CD8-positive, alpha-beta T cell (primary cell): ENCODE measurements at regions of chr1 and their contacts with region 1.

Region 1: DNA sequence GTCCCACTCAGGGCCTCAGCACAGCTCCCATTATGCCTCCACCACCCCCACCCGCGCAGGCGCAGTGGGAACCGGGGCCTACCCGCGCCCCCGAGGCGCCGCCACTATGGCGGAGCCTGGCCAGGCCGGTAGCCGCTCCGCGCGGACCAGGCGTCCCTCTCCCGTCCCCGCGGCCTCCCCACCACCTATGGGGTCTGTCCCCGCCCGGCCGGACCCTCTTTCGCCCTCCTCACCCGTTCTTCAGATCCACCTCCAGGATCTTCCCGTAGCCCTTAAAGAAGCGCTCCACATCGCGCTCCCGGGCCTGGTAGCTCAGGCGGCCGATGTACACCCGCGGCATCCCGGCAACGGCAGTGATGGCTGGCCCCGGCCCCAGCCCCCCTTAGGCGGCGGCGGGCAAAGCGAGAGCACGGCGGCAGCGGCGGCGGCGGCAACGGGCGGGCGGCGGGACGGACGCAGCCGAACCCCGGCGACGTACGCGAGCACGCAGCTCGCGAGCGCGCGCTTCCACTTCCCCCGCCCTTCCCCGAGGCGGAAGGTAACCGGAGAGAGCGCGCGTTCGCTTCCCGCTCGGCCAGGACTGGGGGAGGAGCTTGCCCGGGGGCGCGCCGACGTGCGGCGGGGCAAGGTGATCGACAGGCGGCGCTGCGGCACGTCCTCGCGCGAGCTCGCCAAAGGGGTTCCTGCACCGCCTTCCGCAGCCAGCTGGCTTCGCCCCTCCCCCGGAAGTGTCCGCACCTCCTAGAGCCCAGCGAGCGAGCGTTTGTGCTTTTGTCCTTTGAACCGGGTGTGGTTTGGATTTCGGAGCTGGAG is at the start of gene SRSF4:
- DNase-seq: peak; percentile 98 to 99 (median 99)
- ATAC-seq: peak; percentile 92
- H3K4me3 ChIP-seq: peak within 1 kb of the TSS; percentile 89 to 98
- H3K4me3 Mint-ChIP-seq: peak within 1 kb of the TSS; percentile 94
- H3K27ac ChIP-seq: peak within 1 kb of the TSS; percentile 94 to 100
- H3K27ac Mint-ChIP-seq: peak within 1 kb of the TSS; percentile 94
- H3K4me1 ChIP-seq: peaks cover 37% of the 10 kb centered on the region
- H3K4me1 Mint-ChIP-seq: peaks cover 48% of the 10 kb centered on the region
- H3K27me3 ChIP-seq: no peaks in the 10 kb centered on the region
- H3K27me3 Mint-ChIP-seq: no peaks in the 10 kb centered on the region
- CTCF ChIP-seq: peak; percentile 68
- total RNA-seq, gene SRSF4: 83.6 to 92.2 TPM

Region 2: DNA sequence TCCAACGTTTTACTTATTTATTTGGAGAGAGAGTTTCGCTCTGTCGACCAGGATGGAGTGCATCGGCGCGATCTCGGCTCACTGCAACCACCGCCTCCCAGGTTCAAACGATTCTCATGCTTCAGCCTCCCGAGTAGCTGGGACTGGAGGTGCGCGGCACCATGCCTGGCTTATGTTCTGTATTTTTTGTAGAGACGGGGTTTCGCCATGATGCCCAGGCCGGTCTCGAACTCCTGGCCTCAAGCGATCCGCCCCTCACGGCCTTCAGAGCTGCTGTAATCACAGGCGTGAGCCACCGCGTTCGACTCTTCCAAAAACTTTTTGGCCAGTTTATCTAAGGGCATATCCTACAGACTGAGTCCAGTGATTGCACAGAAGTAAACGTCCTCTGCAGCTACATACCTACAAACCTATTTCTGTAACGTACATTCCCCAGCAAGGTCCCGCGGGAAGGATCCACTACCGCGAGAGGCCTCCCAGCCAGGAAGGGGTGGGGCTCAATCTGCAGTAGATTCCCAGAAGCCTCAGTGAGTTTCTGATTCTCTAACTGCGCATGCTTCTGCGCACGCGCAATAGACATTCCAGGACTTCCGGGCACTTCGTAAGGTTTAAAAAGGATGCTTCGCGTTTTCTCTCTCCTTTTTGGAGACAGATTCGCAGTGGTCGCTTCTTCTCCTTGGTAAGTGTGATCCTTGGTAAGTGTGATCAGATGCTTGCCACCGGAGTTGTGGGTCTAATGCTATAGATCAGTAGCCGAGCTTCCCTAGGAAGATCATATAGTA is 676.0 kb before region 1 on chr1 and contains the start of gene RCC1:
- CTCF ChIA-PET with region 1: no interaction called
- POLR2A ChIA-PET with region 1: interaction called, 3 read pairs
- intact Hi-C with region 1: loop called (anchors 5 kb)
- DNase-seq: peak; percentile 89 to 99 (median 94)
- ATAC-seq: peak; percentile 91
- H3K4me3 ChIP-seq: peak within 1 kb of the TSS; percentile 82 to 88
- H3K4me3 Mint-ChIP-seq: peak within 1 kb of the TSS; percentile 95
- H3K27ac ChIP-seq: peak within 1 kb of the TSS; percentile 77 to 85
- H3K27ac Mint-ChIP-seq: peak within 1 kb of the TSS; percentile 94
- H3K4me1 ChIP-seq: peaks cover 31% of the 10 kb centered on the region
- H3K4me1 Mint-ChIP-seq: peaks cover 45% of the 10 kb centered on the region
- H3K27me3 ChIP-seq: no peaks in the 10 kb centered on the region
- H3K27me3 Mint-ChIP-seq: no peaks in the 10 kb centered on the region
- CTCF ChIP-seq: no peak
- total RNA-seq, gene RCC1: 12.5 to 14.4 TPM

Region 3: DNA sequence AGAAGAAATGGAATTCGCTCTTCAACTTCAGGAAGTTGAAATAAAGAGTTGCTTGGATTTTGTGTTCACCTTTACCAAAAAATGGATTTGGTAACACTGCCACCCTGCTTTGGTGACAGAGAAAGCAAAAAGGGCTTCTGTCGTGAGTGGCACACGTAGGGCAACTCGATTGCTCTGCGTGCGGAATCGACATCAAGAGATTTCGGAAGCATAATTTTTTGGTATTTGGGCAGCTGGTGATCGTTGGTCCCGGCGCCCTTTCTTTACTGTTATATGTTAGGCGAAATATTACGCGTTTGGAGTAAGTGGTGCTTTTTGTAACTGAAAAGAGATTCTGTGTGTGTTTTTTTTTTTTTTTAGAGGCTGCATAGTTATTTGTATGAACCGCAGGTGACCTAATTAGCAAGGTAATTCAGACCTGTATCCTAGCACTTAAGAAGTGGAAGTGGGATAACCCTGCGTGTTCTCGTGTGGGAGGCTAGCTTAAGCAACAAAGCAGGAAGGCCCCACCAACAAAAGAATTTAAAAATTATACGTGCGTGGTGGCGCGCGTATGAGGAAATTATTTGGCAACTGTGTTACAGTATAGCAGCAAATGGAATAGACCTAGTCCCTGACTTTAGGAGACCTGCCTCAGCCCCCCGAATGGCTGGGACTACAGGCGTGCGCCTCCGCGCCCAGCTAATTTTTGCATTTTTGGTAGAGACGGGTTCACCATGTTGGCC is 533.0 kb before region 1 on chr1 and contains the start of gene RNU11:
- CTCF ChIA-PET with region 1: no interaction called
- POLR2A ChIA-PET with region 1: interaction called, 13 read pairs
- intact Hi-C with region 1: loop called (anchors 1 to 2 kb)
- DNase-seq: peak; percentile 76 to 97 (median 87)
- ATAC-seq: peak; percentile 65
- H3K4me3 ChIP-seq: peak within 1 kb of the TSS; percentile 41 to 65
- H3K4me3 Mint-ChIP-seq: peak within 1 kb of the TSS; percentile 80
- H3K27ac ChIP-seq: peak within 1 kb of the TSS; percentile 96 to 98
- H3K27ac Mint-ChIP-seq: peak within 1 kb of the TSS; percentile 99
- H3K4me1 ChIP-seq: peaks cover 30% of the 10 kb centered on the region
- H3K4me1 Mint-ChIP-seq: peaks cover 32% of the 10 kb centered on the region
- H3K27me3 ChIP-seq: no peaks in the 10 kb centered on the region
- H3K27me3 Mint-ChIP-seq: no peaks in the 10 kb centered on the region
- CTCF ChIP-seq: no peak
- total RNA-seq, gene RNU11: not detected

Region 4: DNA sequence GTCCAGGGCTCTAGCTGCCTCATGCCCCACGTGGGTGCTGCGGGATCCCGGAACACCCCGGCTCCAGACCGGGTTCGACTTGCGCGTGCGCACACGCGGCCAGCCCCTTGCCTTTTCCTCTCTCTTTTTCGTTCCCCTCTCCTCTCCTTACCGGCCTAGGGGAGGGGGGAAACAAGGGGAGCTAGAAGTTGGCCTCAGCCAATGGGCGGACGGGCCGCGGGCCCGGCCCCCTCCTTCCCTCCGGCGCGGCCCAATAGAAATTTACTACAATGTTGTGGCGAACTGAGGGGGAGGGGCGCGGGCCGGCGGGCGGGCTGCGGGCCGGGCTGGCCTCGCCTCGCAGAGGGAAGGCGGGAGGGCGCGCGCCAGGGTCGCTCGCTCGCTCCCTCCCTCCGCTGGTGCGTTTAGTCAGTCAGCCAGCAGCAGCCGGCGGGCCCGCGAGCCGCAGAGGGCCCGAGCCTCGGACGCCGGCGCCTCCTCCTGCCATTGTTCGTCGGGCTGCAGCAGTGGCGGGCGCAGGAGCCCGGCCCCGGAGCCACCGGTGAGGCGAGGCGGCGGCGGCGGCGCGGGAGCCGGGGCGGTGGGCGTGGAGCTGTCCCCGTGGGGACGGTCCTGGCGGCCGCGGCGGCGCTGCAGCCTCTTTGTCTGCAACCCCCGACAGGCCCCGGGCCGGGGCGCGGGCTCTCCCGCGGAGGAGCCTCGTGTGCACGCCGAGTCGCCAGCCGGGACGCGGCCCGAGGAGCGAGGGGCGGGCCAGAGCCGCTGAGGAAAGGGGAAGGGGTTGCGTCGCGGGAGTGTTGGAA is 267.2 kb before region 1 on chr1 and contains the start of gene EPB41:
- CTCF ChIA-PET with region 1: no interaction called
- POLR2A ChIA-PET with region 1: interaction called, 14 read pairs
- intact Hi-C with region 1: no loop called
- DNase-seq: peak; percentile 76 to 96 (median 94)
- ATAC-seq: peak; percentile 77
- H3K4me3 ChIP-seq: peak within 1 kb of the TSS; percentile 80 to 86
- H3K4me3 Mint-ChIP-seq: peak within 1 kb of the TSS; percentile 99
- H3K27ac ChIP-seq: peak within 1 kb of the TSS; percentile 62 to 77
- H3K27ac Mint-ChIP-seq: peak within 1 kb of the TSS; percentile 98
- H3K4me1 ChIP-seq: peaks cover 40% of the 10 kb centered on the region
- H3K4me1 Mint-ChIP-seq: peaks cover 49% of the 10 kb centered on the region
- H3K27me3 ChIP-seq: no peaks in the 10 kb centered on the region
- H3K27me3 Mint-ChIP-seq: no peaks in the 10 kb centered on the region
- CTCF ChIP-seq: no peak
- total RNA-seq, gene EPB41: 109 to 117 TPM

Region 5: DNA sequence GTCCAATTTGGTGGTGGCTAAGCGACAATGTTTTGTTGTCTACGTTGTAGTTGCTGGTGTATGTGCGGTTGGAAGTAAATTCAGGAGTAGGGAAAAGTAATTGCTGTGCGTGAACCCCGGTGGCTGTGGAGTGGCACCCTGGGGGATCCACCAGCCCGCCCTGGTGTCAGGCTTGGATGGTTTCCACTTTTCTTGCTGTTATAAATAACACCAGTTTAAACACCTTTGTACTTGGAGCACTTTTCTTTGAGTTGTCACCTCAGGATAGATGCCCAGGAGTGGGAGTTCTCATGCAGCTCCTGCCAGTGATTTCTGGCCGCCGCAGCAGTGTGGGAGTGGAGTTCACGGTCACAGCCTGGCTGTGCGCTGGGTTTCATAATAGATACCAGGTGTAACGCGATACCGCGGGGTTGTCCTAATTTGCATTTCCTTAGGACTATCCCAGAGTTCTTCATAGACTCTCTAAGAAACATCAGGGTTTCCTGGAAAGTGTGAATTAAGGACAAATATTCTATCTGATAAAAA is 45.2 kb before region 1 on chr1:
- CTCF ChIA-PET with region 1: no interaction called
- POLR2A ChIA-PET with region 1: no interaction called
- intact Hi-C with region 1: no loop called
- DNase-seq: no peak
- ATAC-seq: no peak
- H3K4me3 ChIP-seq: no peak overlapping the region
- H3K4me3 Mint-ChIP-seq: no peak overlapping the region
- H3K27ac ChIP-seq: no peak overlapping the region
- H3K27ac Mint-ChIP-seq: no peak overlapping the region
- H3K4me1 ChIP-seq: no peaks in the 10 kb centered on the region
- H3K4me1 Mint-ChIP-seq: peaks cover 3% of the 10 kb centered on the region
- H3K27me3 ChIP-seq: no peaks in the 10 kb centered on the region
- H3K27me3 Mint-ChIP-seq: peaks cover 2% of the 10 kb centered on the region
- CTCF ChIP-seq: no peak

Region 6: DNA sequence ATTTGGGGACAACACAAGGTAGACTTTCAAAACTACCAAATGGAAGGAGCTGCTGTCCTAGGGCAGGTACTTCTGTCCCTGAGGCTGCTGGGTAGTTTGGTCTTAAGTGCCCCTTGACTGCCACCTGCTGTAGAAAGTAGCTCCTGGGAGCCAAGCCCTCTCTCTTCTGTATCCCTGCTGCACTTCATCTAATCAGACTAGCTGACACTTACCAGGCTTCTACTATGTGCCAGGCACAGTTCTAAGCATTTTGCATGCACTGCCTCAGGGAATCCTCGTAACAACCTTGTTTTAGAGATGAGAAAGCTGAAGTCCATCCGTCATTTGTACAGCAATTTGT is 15.9 kb after region 1 on chr1:
- CTCF ChIA-PET with region 1: interaction called, 33 read pairs
- POLR2A ChIA-PET with region 1: interaction called, 14 read pairs
- intact Hi-C with region 1: no loop called
- DNase-seq: peak in 6 of 9 experiments; percentile 11 to 60 (median 42)
- ATAC-seq: peak; percentile 82
- H3K4me3 ChIP-seq: no peak overlapping the region
- H3K4me3 Mint-ChIP-seq: no peak overlapping the region
- H3K27ac ChIP-seq: no peak overlapping the region
- H3K27ac Mint-ChIP-seq: no peak overlapping the region
- H3K4me1 ChIP-seq: no peaks in the 10 kb centered on the region
- H3K4me1 Mint-ChIP-seq: no peaks in the 10 kb centered on the region
- H3K27me3 ChIP-seq: no peaks in the 10 kb centered on the region
- H3K27me3 Mint-ChIP-seq: no peaks in the 10 kb centered on the region
- CTCF ChIP-seq: peak; percentile 27